ENCODE measurements at regions of chr14 and their contacts with region 1.

Region 1: DNA sequence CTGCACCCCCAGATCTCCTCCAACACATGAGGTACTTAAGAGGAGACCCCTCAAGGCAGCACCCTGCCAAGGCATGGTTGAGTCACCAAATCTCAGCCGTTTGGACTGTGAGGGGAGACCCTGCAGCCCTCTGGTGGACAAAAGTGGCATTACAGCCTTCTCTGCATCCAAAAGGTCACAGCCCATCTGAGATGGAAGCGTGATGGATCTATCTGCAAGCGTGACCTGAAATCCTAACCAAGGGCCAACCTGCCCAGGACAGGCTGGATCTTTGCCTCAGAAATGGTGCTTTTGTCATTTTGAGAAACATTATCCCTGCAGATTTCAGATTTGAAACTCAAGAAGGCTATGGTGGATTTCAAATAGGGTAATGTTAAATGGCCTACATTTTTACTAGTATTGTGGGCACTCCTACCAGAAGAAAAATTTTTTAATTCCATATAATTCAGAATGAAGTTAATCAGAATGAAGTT is 23.7 kb upstream of the DHRS4 start:
- DNase-seq: peak; percentile 80 to 89
- ATAC-seq: peak; percentile 91
- H3K4me3 ChIP-seq: no peak overlapping the region
- H3K27ac ChIP-seq: no peak overlapping the region
- H3K4me1 ChIP-seq: no peaks in the 10 kb centered on the region
- H3K27me3 ChIP-seq: no peaks in the 10 kb centered on the region

Region 2: GRCh38 chr14:23631702-23632460 is 298.0 kb before region 1 on chr14:
- intact Hi-C with region 1: loop called in 1 of 2 experiments (anchors 5 kb)
- DNase-seq: peak; percentile 71 to 91
- ATAC-seq: peak; percentile 86
- H3K4me3 ChIP-seq: no peak overlapping the region
- H3K27ac ChIP-seq: no peak overlapping the region
- H3K4me1 ChIP-seq: no peaks in the 10 kb centered on the region
- H3K27me3 ChIP-seq: no peaks in the 10 kb centered on the region

Region 3: DNA sequence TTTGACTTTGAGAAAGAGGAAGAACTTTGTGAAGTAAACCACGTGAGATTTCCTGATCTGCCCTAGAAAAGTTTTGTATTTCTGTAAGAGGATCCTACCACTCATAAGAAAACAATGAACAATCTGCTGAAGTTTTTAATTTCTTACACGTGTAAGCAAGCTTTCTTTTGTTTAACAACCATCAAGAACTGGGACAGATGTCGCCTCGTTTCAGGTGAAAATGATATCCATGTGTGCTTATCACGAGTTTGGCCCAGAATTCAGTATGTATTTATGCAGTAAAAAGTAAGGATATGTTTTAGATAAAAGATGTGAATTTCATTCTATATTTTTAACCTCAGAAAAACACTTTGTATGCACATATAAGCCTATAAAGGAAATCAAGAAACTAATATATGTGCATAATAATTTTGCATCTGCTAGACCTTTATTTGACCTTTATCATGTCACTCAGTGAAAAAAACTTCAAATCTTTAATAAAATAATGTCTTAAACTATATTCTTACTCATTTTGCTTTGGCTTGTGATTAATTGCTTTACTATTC is 33.2 kb before region 1 on chr14:
- intact Hi-C with region 1: no loop called
- DNase-seq: no peak
- ATAC-seq: no peak
- H3K4me3 ChIP-seq: no peak overlapping the region
- H3K27ac ChIP-seq: no peak overlapping the region
- H3K4me1 ChIP-seq: no peaks in the 10 kb centered on the region
- H3K27me3 ChIP-seq: no peaks in the 10 kb centered on the region

Measured in aorta (tissue), 5 donors.